Activated CD4-positive, alpha-beta memory T cell treated with anti-CD3 and anti-CD28 coated beads for 36 hours (primary cell): ENCODE measurements at regions of chr3 and their contacts with region 1.

Region 1: GRCh38 chr3:184298759-184299496 is at the start of gene PSMD2:
- DNase-seq: peak; percentile 99
- H3K4me3 Mint-ChIP-seq: peak within 1 kb of the TSS; percentile 93
- H3K27ac Mint-ChIP-seq: peak within 1 kb of the TSS; percentile 82
- H3K4me1 Mint-ChIP-seq: peaks cover 21% of the 10 kb centered on the region
- H3K27me3 Mint-ChIP-seq: no peaks in the 10 kb centered on the region
- total RNA-seq, gene PSMD2: 246 to 257 TPM

Region 2: DNA sequence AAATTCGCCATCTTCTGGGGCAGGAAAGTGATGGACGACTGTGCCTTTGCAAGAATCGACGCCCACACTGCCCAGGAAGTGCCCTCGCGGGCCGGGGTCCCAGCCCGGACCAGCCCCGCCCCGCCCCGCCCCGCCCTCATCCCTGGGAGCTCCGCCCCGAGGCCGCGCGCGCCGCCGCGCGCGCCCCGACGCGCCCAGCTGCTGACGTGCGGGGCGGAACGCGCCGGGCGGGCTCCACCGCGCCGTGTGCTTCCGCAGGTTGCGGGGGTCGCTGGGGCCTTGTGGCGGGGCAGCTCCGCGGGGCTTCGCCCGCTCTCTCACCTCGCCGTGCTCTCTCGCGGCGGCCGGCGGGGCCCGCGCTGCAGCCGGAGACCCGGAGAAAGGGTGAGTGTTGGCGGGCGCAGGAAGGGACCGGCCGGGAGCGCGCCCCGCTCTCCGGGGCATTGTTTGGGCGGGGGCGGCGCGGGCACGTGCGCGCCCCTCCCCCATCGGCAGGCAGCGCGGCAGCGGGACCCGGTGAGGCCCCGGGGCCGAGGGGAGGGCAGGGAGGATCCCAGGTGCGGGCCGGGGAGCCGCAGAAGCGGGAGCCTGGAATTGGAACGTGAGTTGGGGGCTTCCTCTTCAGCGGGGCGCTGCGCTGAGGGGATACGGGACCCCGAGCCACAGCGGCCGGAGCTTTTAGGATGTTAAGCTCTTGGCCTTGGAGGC is 601.2 kb before region 1 on chr3 and contains the start of gene YEATS2:
- CTCF ChIA-PET with region 1: no interaction called
- POLR2A ChIA-PET with region 1: no interaction called
- intact Hi-C with region 1: loop called (anchors 10 kb)
- DNase-seq: peak; percentile 88
- H3K4me3 Mint-ChIP-seq: peak within 1 kb of the TSS; percentile 82
- H3K27ac Mint-ChIP-seq: peak within 1 kb of the TSS; percentile 86
- H3K4me1 Mint-ChIP-seq: peaks cover 32% of the 10 kb centered on the region
- H3K27me3 Mint-ChIP-seq: no peaks in the 10 kb centered on the region
- total RNA-seq, gene YEATS2: 45.4 to 48.8 TPM

Region 3: GRCh38 chr3:184017672-184018423 is 281.1 kb before region 1 on chr3 and contains the start of gene ABCC5:
- CTCF ChIA-PET with region 1: no interaction called
- POLR2A ChIA-PET with region 1: no interaction called
- intact Hi-C with region 1: loop called (anchors 2 kb)
- DNase-seq: peak; percentile 89
- H3K4me3 Mint-ChIP-seq: peak within 1 kb of the TSS; percentile 99
- H3K27ac Mint-ChIP-seq: peak within 1 kb of the TSS; percentile 85
- H3K4me1 Mint-ChIP-seq: peaks cover 23% of the 10 kb centered on the region
- H3K27me3 Mint-ChIP-seq: peaks cover 5% of the 10 kb centered on the region
- total RNA-seq, gene ABCC5: 13.3 to 15.6 TPM

Region 4: GRCh38 chr3:184185461-184186308 is 113.2 kb before region 1 on chr3 and contains the start of gene ABCF3:
- CTCF ChIA-PET with region 1: interaction called, 3 read pairs
- POLR2A ChIA-PET with region 1: no interaction called
- intact Hi-C with region 1: loop called (anchors 1 kb)
- DNase-seq: peak; percentile 99
- H3K4me3 Mint-ChIP-seq: peak within 1 kb of the TSS; percentile 96
- H3K27ac Mint-ChIP-seq: peak within 1 kb of the TSS; percentile 92
- H3K4me1 Mint-ChIP-seq: peaks cover 29% of the 10 kb centered on the region
- H3K27me3 Mint-ChIP-seq: no peaks in the 10 kb centered on the region
- total RNA-seq, gene ABCF3: 41.2 to 48.7 TPM

Region 5: DNA sequence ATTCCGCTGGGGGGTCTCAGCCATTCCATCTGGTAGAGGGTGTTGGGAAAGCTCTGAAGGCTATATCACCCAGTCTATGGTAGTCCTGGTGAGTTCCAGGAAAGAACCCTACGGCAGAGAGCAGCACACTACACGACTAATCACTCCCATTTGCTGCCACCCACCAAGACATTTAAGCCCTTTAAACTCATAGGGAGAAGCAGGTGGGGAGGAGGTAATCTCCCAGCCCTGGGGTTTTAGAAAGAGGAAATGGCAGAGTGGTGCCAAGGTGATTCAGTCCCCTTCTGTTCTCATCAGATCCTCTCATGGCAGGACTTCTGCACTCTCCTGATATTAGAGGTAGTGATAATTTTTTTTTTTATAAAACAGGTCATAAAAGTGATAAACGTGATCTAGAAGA is 80.1 kb before region 1 on chr3:
- CTCF ChIA-PET with region 1: no interaction called
- POLR2A ChIA-PET with region 1: no interaction called
- intact Hi-C with region 1: no loop called
- DNase-seq: no peak
- H3K4me3 Mint-ChIP-seq: no peak overlapping the region
- H3K27ac Mint-ChIP-seq: no peak overlapping the region
- H3K4me1 Mint-ChIP-seq: no peaks in the 10 kb centered on the region
- H3K27me3 Mint-ChIP-seq: peaks cover 7% of the 10 kb centered on the region

Region 6: DNA sequence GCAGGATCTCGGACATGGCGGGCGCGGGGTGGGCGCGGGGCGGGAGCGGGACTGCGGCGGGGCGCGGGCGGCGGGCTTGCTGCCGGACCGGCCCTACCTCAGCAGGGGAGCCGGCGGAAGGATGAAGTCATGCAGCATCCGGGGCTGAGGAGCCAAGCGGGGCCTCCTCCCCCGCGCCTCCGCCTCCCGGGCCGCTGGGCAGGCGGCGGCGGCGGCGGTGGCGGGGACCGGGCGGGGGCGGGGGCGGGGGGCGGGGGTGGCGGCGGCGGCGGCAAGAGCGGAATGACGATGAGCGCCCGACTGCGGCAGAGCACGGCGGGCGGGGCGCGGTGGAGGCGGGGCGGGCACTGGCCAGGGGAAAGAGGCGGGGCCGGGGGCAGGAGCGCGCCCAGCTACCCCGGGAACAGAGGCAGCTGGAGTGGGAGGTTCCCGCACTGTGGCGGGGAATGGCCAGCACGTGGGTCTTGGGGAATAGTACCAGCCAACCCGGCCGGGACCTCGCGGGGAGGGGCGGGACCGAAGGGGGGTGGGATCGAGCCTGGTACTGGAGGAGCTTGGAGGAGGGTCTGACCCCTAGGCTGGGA is 37.6 kb before region 1 on chr3 and contains the start of gene CAMK2N2:
- CTCF ChIA-PET with region 1: interaction called, 3 read pairs
- POLR2A ChIA-PET with region 1: no interaction called
- intact Hi-C with region 1: loop called (anchors 2 kb)
- DNase-seq: peak; percentile 65
- H3K4me3 Mint-ChIP-seq: peak within 1 kb of the TSS; percentile 79
- H3K27ac Mint-ChIP-seq: peak within 1 kb of the TSS; percentile 25
- H3K4me1 Mint-ChIP-seq: peaks cover 20% of the 10 kb centered on the region
- H3K27me3 Mint-ChIP-seq: peaks cover 22% of the 10 kb centered on the region
- total RNA-seq, gene CAMK2N2: 0.21 to 0.51 TPM

Region 7: DNA sequence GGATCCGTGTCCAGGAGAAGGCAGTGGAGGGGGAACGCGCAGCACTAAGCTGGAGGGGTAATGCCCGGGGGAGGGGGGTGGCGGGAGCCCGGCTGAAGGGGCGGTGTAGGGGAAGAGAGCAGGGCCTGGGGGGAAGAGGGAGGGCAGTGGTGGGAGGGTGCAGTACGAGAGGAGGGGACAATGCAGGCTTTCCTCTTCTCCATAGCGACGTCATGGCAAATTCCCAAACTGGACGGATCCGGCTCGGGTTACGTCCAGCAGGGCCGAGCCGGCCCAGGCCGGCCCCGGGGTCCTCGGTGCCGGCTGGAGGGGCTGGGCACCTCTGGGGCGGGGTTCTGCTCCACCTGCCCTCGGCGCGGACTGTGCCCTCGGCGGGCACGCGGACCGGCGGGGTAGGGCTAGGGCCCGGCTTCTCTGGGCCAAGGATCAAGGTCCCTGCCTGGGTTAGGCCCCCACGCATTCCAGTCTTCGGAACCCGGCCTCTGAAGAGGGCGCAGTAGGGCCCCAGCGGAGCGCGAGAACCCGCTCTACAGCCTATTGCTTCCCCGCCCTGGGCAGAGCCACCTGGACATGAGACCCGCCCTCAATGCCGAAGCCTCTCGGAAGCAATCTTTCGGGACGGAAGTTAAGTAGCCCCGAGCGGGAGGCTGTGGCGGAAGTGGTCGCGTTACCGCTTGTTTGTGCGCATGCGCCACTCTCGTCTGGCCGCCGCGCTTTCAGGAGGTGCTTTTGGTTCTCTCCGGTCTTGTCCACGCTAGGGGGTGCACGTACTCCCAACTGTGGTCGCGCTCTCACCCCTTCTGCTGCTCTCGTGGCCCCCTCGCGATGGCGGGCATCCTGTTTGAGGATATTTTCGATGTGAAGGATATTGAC is 64.0 kb after region 1 on chr3:
- CTCF ChIA-PET with region 1: no interaction called
- POLR2A ChIA-PET with region 1: interaction called, 3 read pairs
- intact Hi-C with region 1: loop called (anchors 1 kb)
- DNase-seq: peak; percentile 98
- H3K4me3 Mint-ChIP-seq: peak overlapping the region; percentile 96
- H3K27ac Mint-ChIP-seq: peak overlapping the region; percentile 94
- H3K4me1 Mint-ChIP-seq: peaks cover 30% of the 10 kb centered on the region
- H3K27me3 Mint-ChIP-seq: no peaks in the 10 kb centered on the region